Activated T-helper 1 cell treated with anti-CD3 and anti-CD28 coated beads, Interleukin-12 subunit alpha, Interleukin-12 subunit beta, Interleukin-2, Interleukin-4 antibody, amounts not matched to agents 30 ng/mL and 10 ng/mL and 1 ng/mL, durations not matched to agents 14 hours and 24 hours and 36 hours (primary cell): ENCODE measurements at regions of chr13 and their contacts with region 1.

Region 1: GRCh38 chr13:24574847-24575246 is 62.3 kb upstream of the PARP4 start:
- DNase-seq: no peak
- H3K4me3 Mint-ChIP-seq: no peak overlapping the region
- H3K27ac Mint-ChIP-seq: no peak overlapping the region
- H3K4me1 Mint-ChIP-seq: no peaks in the 10 kb centered on the region
- H3K27me3 Mint-ChIP-seq: peaks cover 14% of the 10 kb centered on the region

Region 2: GRCh38 chr13:24520733-24521132 is 54.1 kb before region 1 on chr13:
- intact Hi-C with region 1: no loop called
- DNase-seq: no peak
- H3K4me3 Mint-ChIP-seq: no peak overlapping the region
- H3K27ac Mint-ChIP-seq: no peak overlapping the region
- H3K4me1 Mint-ChIP-seq: peaks cover 11% of the 10 kb centered on the region
- H3K27me3 Mint-ChIP-seq: peaks cover 5% of the 10 kb centered on the region

Region 3: DNA sequence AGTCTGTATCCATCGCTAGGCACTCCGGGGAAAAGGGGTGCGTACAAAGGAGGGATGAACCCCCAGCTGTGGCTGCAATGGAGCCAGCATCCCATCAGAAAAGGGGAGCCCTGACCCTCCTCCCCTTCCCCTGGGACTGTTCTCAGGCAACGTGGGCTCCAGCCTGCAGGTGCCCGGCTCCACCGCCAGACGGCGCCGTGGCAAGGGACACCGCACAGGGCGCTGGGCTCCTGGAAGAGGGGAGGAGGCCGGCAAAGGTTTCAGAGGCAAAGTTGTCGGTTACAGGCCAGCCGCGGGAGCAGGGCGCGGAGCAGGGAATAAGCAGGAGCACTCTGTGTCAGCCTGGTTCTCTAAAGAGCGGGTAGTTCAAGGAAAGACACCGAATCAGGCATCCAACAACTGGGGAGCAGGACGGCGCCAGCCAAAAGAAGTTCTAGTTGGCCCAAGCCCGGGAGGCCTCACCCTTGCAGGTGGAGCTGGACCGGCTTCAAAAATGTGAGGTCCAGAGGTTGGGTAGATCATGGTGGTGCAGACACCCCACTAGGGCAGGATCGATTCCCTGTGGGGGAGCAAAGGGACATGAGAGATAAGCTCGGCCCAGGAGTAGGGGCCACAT is 52.4 kb after region 1 on chr13:
- intact Hi-C with region 1: loop called (anchors 5 kb)
- DNase-seq: no peak
- H3K4me3 Mint-ChIP-seq: no peak overlapping the region
- H3K27ac Mint-ChIP-seq: no peak overlapping the region
- H3K4me1 Mint-ChIP-seq: peaks cover 42% of the 10 kb centered on the region
- H3K27me3 Mint-ChIP-seq: no peaks in the 10 kb centered on the region